BJ (cell line): ENCODE measurements at regions of chr4 and their contacts with region 1.

Region 1: GRCh38 chr4:75908555-75908954 is 6.3 kb upstream of the PPEF2 start:
- DNase-seq: no peak
- H3K4me3 ChIP-seq: no peak overlapping the region
- H3K27me3 ChIP-seq: peaks cover 2% of the 10 kb centered on the region
- CTCF ChIP-seq: no peak

Region 2: GRCh38 chr4:75895744-75896314 is 12.7 kb before region 1 on chr4:
- CTCF ChIA-PET with region 1: interaction called, 48 read pairs
- POLR2A ChIA-PET with region 1: no interaction called
- DNase-seq: no peak
- H3K4me3 ChIP-seq: no peak overlapping the region
- H3K27me3 ChIP-seq: peaks cover 3% of the 10 kb centered on the region; the same call in 1 of the 2 replicates
- CTCF ChIP-seq: peak; percentile 62